Mammary epithelial cell (primary cell): ENCODE measurements at regions of chr6 and their contacts with region 1.

Region 1: GRCh38 chr6:52829046-52829817 is 11.4 kb downstream of the GSTA5 start:
- DNase-seq: no peak
- H3K4me3 ChIP-seq: no peak overlapping the region
- H3K27ac ChIP-seq: no peak overlapping the region
- H3K4me1 ChIP-seq: no peaks in the 10 kb centered on the region
- H3K27me3 ChIP-seq: peaks cover 8% of the 10 kb centered on the region
- CTCF ChIP-seq: no peak

Region 2: GRCh38 chr6:52788478-52788877 is 40.8 kb before region 1 on chr6:
- CTCF ChIA-PET with region 1: no interaction called
- dilution Hi-C with region 1: no loop called
- in situ Hi-C with region 1: loop called in 1 of 2 experiments (anchors 5 kb)
- intact Hi-C with region 1: no loop called
- DNase-seq: no peak
- H3K4me3 ChIP-seq: no peak overlapping the region
- H3K27ac ChIP-seq: no peak overlapping the region
- H3K4me1 ChIP-seq: no peaks in the 10 kb centered on the region
- H3K27me3 ChIP-seq: no peaks in the 10 kb centered on the region
- CTCF ChIP-seq: no peak

Region 3: DNA sequence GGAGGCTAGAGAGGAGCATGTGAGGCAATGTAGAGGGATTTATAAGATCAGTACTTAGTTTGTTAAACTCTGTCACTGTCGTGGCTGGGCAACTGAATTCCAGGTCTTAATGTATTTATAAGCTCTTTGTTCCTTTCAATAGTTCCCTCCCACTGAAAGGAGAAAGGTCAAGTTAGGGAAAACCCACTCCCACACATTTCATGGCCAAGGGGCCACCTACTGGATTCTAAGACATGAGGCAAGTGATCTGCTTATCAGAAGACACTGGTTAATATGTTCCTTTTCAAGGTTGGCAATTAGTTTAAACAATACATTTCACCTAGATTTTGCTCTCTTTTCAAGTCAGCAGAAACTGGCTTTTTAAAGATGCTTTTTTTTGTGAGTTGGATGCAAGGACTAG is 16.8 kb after region 1 on chr6:
- CTCF ChIA-PET with region 1: no interaction called
- dilution Hi-C with region 1: no loop called
- in situ Hi-C with region 1: no loop called
- intact Hi-C with region 1: no loop called
- DNase-seq: no peak
- H3K4me3 ChIP-seq: no peak overlapping the region
- H3K27ac ChIP-seq: no peak overlapping the region
- H3K4me1 ChIP-seq: no peaks in the 10 kb centered on the region
- H3K27me3 ChIP-seq: peaks cover 4% of the 10 kb centered on the region
- CTCF ChIP-seq: no peak

Region 4: DNA sequence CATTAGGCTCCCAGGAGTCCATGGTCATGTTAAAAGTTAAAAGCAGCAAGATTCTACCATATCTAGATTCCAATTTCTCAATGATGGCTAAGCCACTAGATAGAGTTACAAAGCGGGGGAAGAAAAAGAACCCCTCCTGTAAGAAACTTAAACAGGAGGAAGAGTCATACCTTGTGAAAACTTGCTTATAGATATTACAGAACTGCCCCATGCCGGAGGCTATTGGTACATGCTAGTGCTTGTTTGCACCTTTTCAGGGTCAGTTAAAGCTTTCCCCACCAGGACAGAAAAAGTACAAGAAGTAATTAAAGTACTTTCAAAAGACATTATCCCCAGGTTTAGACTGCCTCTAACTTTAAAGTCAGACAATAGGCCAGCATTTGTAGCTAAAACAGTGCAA is 95.8 kb after region 1 on chr6:
- CTCF ChIA-PET with region 1: no interaction called
- dilution Hi-C with region 1: no loop called
- in situ Hi-C with region 1: no loop called
- intact Hi-C with region 1: no loop called
- DNase-seq: peak; percentile 57
- H3K4me3 ChIP-seq: no peak overlapping the region
- H3K27ac ChIP-seq: no peak overlapping the region
- H3K4me1 ChIP-seq: peaks cover 27% of the 10 kb centered on the region
- H3K27me3 ChIP-seq: no peaks in the 10 kb centered on the region
- CTCF ChIP-seq: no peak